ENCODE measurements at regions of chr15 and their contacts with region 1.

Region 1: GRCh38 chr15:31215490-31216214 is 111.0 kb upstream of the KLF13 start:
- DNase-seq: no peak
- H3K4me3 ChIP-seq: peak overlapping the region; percentile 54 to 73
- H3K27ac ChIP-seq: peak overlapping the region; percentile 96
- H3K4me1 ChIP-seq: peaks cover 34% of the 10 kb centered on the region
- H3K27me3 ChIP-seq: no peaks in the 10 kb centered on the region
- CTCF ChIP-seq: peak; percentile 36 to 87 (median 81)
- POLR2A ChIP-seq: no peak

Region 2: GRCh38 chr15:30063835-30064546 is 1151.7 kb before region 1 on chr15:
- intact Hi-C with region 1: loop called (anchors 5 kb)
- DNase-seq: no peak
- H3K4me3 ChIP-seq: no peak overlapping the region
- H3K27ac ChIP-seq: no peak overlapping the region
- H3K4me1 ChIP-seq: no peaks in the 10 kb centered on the region
- H3K27me3 ChIP-seq: no peaks in the 10 kb centered on the region
- CTCF ChIP-seq: no peak
- POLR2A ChIP-seq: no peak

Region 3: DNA sequence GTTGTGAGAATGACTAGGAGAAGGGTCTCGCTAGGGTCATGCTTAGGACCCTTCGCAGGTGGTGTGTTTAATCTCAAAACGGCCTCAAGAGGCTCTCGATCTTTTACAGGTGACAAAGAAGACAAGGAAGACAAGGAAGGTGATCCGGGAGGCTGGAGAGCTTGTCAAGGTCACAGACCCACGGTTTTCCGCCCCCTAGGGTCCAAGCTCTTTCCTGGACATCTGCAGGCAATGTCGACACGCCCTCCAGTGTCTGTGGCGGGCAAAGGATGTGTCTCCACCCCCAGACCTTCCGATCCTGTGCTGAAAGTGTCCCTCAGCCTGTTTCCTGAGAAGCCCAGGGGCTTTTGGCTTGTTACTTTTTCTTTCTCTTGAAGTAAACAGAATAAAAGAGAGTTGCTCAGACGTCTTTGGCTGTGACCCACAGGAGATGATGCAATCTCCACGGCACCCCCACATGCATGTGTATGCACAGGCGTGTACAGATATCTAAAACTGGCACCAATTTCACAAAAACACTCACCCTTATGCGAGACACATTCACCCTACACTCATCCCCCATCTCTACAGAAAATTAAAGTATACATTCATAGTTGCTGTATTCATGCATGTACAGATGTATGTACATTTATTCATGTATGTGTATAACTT is 219.7 kb after region 1 on chr15:
- intact Hi-C with region 1: loop called (anchors 10 kb)
- DNase-seq: peak in 1 of 2 donors; percentile 95
- H3K4me3 ChIP-seq: peak overlapping the region; percentile 4
- H3K27ac ChIP-seq: peak overlapping the region; percentile 91
- H3K4me1 ChIP-seq: peaks cover 46% of the 10 kb centered on the region
- H3K27me3 ChIP-seq: no peaks in the 10 kb centered on the region
- CTCF ChIP-seq: peak; percentile 38 to 61 (median 44)
- POLR2A ChIP-seq: no peak

Region 4: GRCh38 chr15:31488426-31489204 is 273.0 kb after region 1 on chr15:
- intact Hi-C with region 1: loop called (anchors 1 kb)
- DNase-seq: peak; percentile 92 to 93
- H3K4me3 ChIP-seq: no peak overlapping the region
- H3K27ac ChIP-seq: peak overlapping the region; percentile 86
- H3K4me1 ChIP-seq: peaks cover 38% of the 10 kb centered on the region
- H3K27me3 ChIP-seq: no peaks in the 10 kb centered on the region
- CTCF ChIP-seq: peak; percentile 79 to 99 (median 97)
- POLR2A ChIP-seq: no peak